ENCODE measurements at regions of chr11 and their contacts with region 1.

Region 1: DNA sequence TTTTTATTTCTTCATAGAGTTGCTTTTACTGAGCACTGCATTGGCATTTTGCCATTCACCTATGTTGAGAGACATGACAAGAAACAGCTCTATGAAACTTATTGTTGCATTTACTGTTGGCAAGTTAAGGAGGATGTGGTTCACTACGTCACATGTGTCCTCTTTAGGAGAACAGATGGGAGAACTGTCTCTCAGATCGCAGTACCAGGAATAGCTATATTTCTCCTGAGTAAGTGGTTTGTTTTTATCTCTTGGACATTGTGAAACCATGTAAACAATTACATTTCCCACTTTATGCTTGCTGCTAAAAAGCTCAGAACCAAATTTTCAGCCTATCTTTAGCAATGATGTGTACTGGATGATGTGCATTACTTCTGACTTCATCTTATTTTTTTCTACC is 34.8 kb upstream of the PSMA1 start:
- DNase-seq: no peak
- H3K4me3 Mint-ChIP-seq: no peak overlapping the region
- H3K27ac Mint-ChIP-seq: peak overlapping the region; percentile 66
- H3K4me1 Mint-ChIP-seq: peaks cover 31% of the 10 kb centered on the region
- H3K27me3 Mint-ChIP-seq: no peaks in the 10 kb centered on the region

Region 2: DNA sequence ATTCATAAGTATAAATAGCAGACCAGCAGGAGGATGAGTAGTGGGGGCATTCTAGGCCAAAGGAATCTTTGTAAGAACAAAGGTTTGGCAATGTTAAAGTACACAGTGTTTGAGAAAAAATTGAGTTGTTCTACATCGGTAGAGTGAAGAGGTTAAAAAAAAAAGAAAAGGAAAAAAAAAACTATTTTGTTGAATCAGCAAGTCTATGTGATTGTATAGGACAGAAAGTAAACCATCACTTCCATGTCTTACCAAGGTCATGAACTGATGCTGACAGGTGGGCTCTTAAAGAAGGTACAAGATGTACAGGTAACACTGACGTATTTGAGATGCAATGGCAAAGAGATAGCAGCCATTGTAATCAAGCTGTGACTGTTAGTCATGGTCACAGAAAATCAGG is 1029.7 kb before region 1 on chr11:
- CTCF ChIA-PET with region 1: no interaction called
- POLR2A ChIA-PET with region 1: no interaction called
- intact Hi-C with region 1: no loop called
- DNase-seq: no peak
- H3K4me3 Mint-ChIP-seq: no peak overlapping the region
- H3K27ac Mint-ChIP-seq: no peak overlapping the region
- H3K4me1 Mint-ChIP-seq: no peaks in the 10 kb centered on the region
- H3K27me3 Mint-ChIP-seq: no peaks in the 10 kb centered on the region

Region 3: GRCh38 chr11:14544611-14545010 is 10.3 kb before region 1 on chr11:
- CTCF ChIA-PET with region 1: interaction called, 3 read pairs
- POLR2A ChIA-PET with region 1: interaction called, 3 read pairs
- intact Hi-C with region 1: loop called (anchors 1 kb)
- DNase-seq: no peak
- H3K4me3 Mint-ChIP-seq: no peak overlapping the region
- H3K27ac Mint-ChIP-seq: peak overlapping the region; percentile 82
- H3K4me1 Mint-ChIP-seq: peaks cover 39% of the 10 kb centered on the region
- H3K27me3 Mint-ChIP-seq: no peaks in the 10 kb centered on the region

Region 4: DNA sequence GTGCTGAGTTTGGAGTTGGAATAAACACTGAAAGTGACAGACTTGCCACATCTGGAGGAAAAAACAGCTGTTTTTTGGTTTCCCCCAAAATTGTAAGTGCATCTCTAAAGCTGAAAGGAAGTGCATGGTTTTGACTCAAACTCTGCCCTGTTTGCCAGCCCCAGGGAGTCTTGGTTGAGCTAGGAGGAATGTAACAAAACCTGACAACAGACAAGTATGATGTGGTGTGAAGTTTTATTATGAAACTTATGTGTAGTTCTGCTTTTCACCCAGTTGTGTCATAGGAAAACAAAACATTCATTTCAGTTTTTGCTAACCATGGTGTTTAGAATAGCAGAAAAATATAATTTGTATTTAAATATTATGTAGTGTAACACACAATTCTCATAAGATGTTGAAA is 57.0 kb after region 1 on chr11:
- CTCF ChIA-PET with region 1: no interaction called
- POLR2A ChIA-PET with region 1: no interaction called
- intact Hi-C with region 1: loop called (anchors 2 kb)
- DNase-seq: peak; percentile 46
- H3K4me3 Mint-ChIP-seq: no peak overlapping the region
- H3K27ac Mint-ChIP-seq: no peak overlapping the region
- H3K4me1 Mint-ChIP-seq: peaks cover 23% of the 10 kb centered on the region
- H3K27me3 Mint-ChIP-seq: no peaks in the 10 kb centered on the region